CD8-positive, alpha-beta T cell (primary cell): ENCODE measurements at regions of chr17 and their contacts with region 1.

Region 1: DNA sequence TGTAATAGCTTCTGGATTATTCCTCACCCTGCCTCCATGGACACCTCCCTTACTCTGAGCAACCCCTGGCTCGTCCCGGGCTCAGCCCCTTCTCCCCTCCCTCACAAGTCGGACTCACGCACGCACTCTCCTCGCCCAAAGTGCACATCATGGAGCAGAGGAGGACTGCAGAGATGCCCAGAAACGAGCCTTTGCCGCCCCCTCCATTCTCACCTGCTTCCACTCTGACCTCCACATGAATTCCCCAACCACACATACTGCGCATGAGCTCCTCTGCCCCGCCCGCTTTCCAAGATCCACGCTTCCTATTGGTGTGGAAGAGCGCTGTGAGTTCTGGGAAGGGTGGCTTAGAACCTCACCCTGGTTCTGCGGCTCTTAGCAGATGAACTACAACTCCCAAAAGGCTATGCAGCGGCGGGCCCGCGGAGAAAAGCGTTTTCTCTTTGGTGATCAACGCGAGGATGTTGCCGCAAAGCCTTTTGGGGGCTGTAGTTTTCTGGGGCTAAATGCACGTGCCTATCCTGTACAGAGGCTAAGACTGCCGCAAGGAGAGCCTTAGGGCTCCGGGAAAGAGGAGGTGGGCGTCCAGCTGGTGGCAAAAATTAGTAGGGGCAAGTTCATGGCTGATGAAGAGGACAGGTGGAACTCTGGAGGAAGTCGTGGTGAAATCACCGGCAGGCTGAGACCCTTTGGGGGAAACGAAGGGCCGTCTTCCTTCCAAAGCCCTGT is at the start of gene PHB1:
- DNase-seq: peak; percentile 86 to 98 (median 94)
- ATAC-seq: peak; percentile 98
- H3K4me3 ChIP-seq: peak within 1 kb of the TSS; percentile 80 to 96
- H3K4me3 Mint-ChIP-seq: peak within 1 kb of the TSS; percentile 99
- H3K27ac ChIP-seq: peak within 1 kb of the TSS; percentile 43 to 61
- H3K27ac Mint-ChIP-seq: peak within 1 kb of the TSS; percentile 93
- H3K4me1 ChIP-seq: peaks cover 12% of the 10 kb centered on the region
- H3K4me1 Mint-ChIP-seq: peaks cover 31% of the 10 kb centered on the region
- H3K27me3 ChIP-seq: no peaks in the 10 kb centered on the region
- H3K27me3 Mint-ChIP-seq: no peaks in the 10 kb centered on the region
- CTCF ChIP-seq: no peak
- total RNA-seq, gene PHB1: 26.3 to 27.0 TPM

Region 2: DNA sequence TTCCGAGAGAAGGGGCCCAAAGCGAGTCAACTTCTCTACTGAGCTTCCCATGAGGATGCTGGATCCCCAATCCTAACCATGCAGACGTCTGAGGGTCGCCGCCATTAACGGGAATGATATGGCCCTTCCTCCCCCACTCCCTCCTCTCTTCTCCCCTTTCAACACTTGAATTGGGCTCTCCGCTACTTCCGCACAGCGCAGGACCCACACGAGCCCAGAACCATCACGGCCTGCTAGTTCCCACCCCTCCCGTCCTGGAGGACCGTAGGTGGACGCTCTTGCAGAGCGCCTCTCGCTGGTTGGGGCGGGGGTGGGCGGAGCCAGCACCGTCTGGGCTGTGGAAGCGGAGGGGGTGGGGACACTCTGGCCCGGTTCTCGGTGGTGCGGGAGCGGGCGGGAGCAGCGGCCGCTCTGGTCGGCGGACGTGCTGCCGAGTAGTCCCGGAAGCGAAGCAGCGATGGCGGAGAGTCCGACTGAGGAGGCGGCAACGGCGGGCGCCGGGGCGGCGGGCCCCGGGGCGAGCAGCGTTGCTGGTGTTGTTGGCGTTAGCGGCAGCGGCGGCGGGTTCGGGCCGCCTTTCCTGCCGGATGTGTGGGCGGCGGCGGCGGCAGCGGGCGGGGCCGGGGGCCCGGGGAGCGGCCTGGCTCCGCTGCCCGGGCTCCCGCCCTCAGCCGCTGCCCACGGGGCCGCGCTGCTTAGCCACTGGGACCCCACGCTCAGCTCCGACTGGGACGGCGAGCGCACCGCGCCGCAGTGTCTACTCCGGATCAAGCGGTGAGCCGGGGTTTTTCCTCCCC is 506.5 kb before region 1 on chr17 and contains the start of gene UBE2Z:
- CTCF ChIA-PET with region 1: no interaction called
- POLR2A ChIA-PET with region 1: no interaction called
- intact Hi-C with region 1: loop called in 1 of 2 experiments (anchors 2 kb)
- DNase-seq: peak; percentile 79 to 96 (median 88)
- ATAC-seq: peak; percentile 87
- H3K4me3 ChIP-seq: peak within 1 kb of the TSS; percentile 74 to 77
- H3K4me3 Mint-ChIP-seq: peak within 1 kb of the TSS; percentile 95
- H3K27ac ChIP-seq: peak within 1 kb of the TSS; percentile 88 to 95
- H3K27ac Mint-ChIP-seq: peak within 1 kb of the TSS; percentile 99
- H3K4me1 ChIP-seq: peaks cover 39% of the 10 kb centered on the region
- H3K4me1 Mint-ChIP-seq: peaks cover 49% of the 10 kb centered on the region
- H3K27me3 ChIP-seq: no peaks in the 10 kb centered on the region
- H3K27me3 Mint-ChIP-seq: no peaks in the 10 kb centered on the region
- CTCF ChIP-seq: no peak
- total RNA-seq, gene UBE2Z: 56.4 to 56.7 TPM

Region 3: GRCh38 chr17:48944519-48945260 is 470.1 kb before region 1 on chr17 and contains the start of gene SNF8:
- CTCF ChIA-PET with region 1: no interaction called
- POLR2A ChIA-PET with region 1: no interaction called
- intact Hi-C with region 1: loop called in 1 of 2 experiments (anchors 2 kb)
- DNase-seq: peak; percentile 83 to 96 (median 92)
- ATAC-seq: peak; percentile 93
- H3K4me3 ChIP-seq: peak within 1 kb of the TSS; percentile 94 to 98
- H3K4me3 Mint-ChIP-seq: peak within 1 kb of the TSS; percentile 97
- H3K27ac ChIP-seq: peak within 1 kb of the TSS; percentile 90 to 93
- H3K27ac Mint-ChIP-seq: peak within 1 kb of the TSS; percentile 97
- H3K4me1 ChIP-seq: peaks cover 25% of the 10 kb centered on the region
- H3K4me1 Mint-ChIP-seq: peaks cover 19% of the 10 kb centered on the region
- H3K27me3 ChIP-seq: no peaks in the 10 kb centered on the region
- H3K27me3 Mint-ChIP-seq: no peaks in the 10 kb centered on the region
- CTCF ChIP-seq: no peak
- total RNA-seq, gene SNF8: 61.7 to 64.3 TPM

Region 4: GRCh38 chr17:49471089-49471683 is 56.4 kb after region 1 on chr17:
- CTCF ChIA-PET with region 1: no interaction called
- POLR2A ChIA-PET with region 1: no interaction called
- intact Hi-C with region 1: no loop called
- DNase-seq: no peak
- ATAC-seq: no peak
- H3K4me3 ChIP-seq: no peak overlapping the region
- H3K4me3 Mint-ChIP-seq: no peak overlapping the region
- H3K27ac ChIP-seq: no peak overlapping the region
- H3K27ac Mint-ChIP-seq: no peak overlapping the region
- H3K4me1 ChIP-seq: peaks cover 9% of the 10 kb centered on the region
- H3K4me1 Mint-ChIP-seq: peaks cover 4% of the 10 kb centered on the region
- H3K27me3 ChIP-seq: peaks cover 13 to 22% of the 10 kb centered on the region in 2 experiments
- H3K27me3 Mint-ChIP-seq: peaks cover 60% of the 10 kb centered on the region
- CTCF ChIP-seq: no peak

Region 5: GRCh38 chr17:49496183-49496866 is 81.5 kb after region 1 on chr17:
- CTCF ChIA-PET with region 1: no interaction called
- POLR2A ChIA-PET with region 1: no interaction called
- intact Hi-C with region 1: loop called (anchors 1 to 5 kb)
- DNase-seq: peak; percentile 74 to 91 (median 85)
- ATAC-seq: peak; percentile 83
- H3K4me3 ChIP-seq: peak overlapping the region; percentile 53 to 67
- H3K4me3 Mint-ChIP-seq: peak overlapping the region; percentile 79
- H3K27ac ChIP-seq: no peak overlapping the region
- H3K27ac Mint-ChIP-seq: no peak overlapping the region
- H3K4me1 ChIP-seq: peaks cover 33% of the 10 kb centered on the region
- H3K4me1 Mint-ChIP-seq: peaks cover 28% of the 10 kb centered on the region
- H3K27me3 ChIP-seq: peaks cover 28 to 29% of the 10 kb centered on the region in 2 experiments
- H3K27me3 Mint-ChIP-seq: peaks cover 36% of the 10 kb centered on the region
- CTCF ChIP-seq: peak; percentile 89

Region 6: DNA sequence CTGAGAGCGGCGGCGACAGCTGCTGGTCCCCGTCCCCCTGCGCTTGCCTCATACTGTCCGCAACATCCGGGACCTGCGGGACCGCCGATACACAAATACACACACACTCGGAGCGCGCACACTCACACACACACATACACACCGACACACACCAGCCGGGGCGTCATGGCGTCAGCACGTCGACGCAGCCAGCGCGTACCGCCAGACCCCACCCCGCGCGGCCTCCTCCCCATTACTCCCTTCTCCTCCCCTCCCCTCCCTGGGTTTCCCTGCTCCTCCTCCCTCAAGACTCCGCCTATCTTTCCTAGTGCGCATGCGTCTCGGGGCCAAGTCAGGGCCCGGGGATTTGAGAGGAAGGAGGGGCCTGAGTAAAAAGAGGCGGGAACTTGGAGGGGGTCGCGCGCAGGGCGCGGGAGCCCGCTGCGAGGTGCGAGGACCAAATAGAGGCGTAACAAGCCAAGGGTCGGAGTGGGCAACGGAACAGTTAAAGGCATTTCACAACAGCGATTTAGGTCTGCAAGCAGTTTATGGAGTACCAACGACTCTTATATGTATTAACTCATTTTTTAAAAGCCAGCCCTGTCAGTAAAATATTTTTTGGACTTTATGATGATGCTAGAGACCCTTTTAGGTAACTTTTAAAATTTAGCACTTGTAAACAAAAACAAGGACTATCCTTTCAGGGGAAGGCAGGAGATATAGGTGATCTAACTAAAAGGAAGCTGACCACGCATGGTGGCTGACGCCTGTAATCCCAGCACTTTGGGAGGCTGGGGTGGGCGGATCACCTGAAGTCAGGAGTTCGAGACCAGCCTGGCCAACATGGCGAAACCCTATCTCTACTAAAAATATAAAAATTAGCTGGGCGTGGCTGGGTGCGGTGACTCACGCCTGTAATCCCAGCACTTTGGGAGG is 263.4 kb after region 1 on chr17 and contains the start of gene SPOP:
- CTCF ChIA-PET with region 1: no interaction called
- POLR2A ChIA-PET with region 1: no interaction called
- intact Hi-C with region 1: loop called in 1 of 2 experiments (anchors 5 kb)
- DNase-seq: peak; percentile 97 to 100 (median 99)
- ATAC-seq: peak; percentile 94
- H3K4me3 ChIP-seq: peak within 1 kb of the TSS; percentile 76 to 81
- H3K4me3 Mint-ChIP-seq: peak within 1 kb of the TSS; percentile 97
- H3K27ac ChIP-seq: peak within 1 kb of the TSS; percentile 91 to 98
- H3K27ac Mint-ChIP-seq: peak within 1 kb of the TSS; percentile 100
- H3K4me1 ChIP-seq: peaks cover 29% of the 10 kb centered on the region
- H3K4me1 Mint-ChIP-seq: peaks cover 49% of the 10 kb centered on the region
- H3K27me3 ChIP-seq: no peaks in the 10 kb centered on the region
- H3K27me3 Mint-ChIP-seq: no peaks in the 10 kb centered on the region
- CTCF ChIP-seq: no peak
- total RNA-seq, gene SPOP: 30.5 to 34.3 TPM

Region 7: DNA sequence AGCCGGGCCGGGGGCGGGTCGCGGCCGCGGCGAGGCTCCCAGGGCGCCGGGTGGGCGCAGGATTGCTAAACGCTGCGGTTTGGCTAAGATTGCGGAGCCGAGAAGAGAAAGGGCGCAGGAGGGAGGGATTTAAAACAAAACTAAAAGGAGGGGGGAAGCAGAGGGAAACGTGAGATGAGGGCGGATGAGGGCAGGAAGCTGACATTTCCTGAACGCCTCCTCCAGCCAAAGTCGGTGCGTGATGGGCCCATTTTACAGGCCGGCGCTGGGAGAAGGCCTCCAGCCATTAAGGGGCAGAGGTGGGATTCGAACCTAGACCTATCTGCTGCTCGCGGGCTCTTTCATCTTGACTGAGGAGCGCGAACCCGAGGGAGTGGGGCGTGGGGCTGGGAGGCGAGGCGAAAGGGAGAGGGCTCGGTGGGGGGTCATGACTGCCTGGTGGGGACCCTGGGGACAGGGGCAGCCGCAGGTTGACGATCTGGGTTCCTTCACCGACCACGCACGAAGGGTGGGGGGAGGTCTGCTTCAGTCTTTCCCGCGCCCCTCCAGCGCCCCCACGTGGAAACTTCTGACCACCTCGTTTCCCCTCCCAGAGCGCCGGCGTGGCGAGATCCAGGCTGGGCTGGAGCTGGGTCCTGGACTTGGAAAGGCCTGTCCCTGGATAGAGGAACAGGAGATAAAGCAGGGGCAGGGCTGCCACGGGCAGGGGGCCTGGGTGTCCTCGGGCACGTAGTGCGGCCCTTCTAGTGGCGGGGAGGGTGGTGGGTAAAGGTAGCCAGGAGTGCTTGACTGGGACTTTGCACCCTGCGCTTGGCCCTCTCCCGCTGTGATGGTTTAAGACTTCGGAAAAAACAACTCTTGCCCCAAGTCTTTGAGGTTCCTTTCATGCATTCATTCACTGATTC is 436.9 kb after region 1 on chr17:
- CTCF ChIA-PET with region 1: no interaction called
- POLR2A ChIA-PET with region 1: no interaction called
- intact Hi-C with region 1: loop called in 1 of 2 experiments (anchors 10 kb)
- DNase-seq: peak; percentile 47 to 87 (median 76)
- ATAC-seq: peak; percentile 77
- H3K4me3 ChIP-seq: peak overlapping the region; percentile 73 to 83
- H3K4me3 Mint-ChIP-seq: peak overlapping the region; percentile 92
- H3K27ac ChIP-seq: peak overlapping the region; percentile 59 to 66
- H3K27ac Mint-ChIP-seq: peak overlapping the region; percentile 89
- H3K4me1 ChIP-seq: peaks cover 17% of the 10 kb centered on the region
- H3K4me1 Mint-ChIP-seq: peaks cover 15% of the 10 kb centered on the region
- H3K27me3 ChIP-seq: no peaks in the 10 kb centered on the region
- H3K27me3 Mint-ChIP-seq: no peaks in the 10 kb centered on the region
- CTCF ChIP-seq: peak; percentile 72